AG04449 (cell line): ENCODE measurements at regions of chr1 and their contacts with region 1.

Region 1: DNA sequence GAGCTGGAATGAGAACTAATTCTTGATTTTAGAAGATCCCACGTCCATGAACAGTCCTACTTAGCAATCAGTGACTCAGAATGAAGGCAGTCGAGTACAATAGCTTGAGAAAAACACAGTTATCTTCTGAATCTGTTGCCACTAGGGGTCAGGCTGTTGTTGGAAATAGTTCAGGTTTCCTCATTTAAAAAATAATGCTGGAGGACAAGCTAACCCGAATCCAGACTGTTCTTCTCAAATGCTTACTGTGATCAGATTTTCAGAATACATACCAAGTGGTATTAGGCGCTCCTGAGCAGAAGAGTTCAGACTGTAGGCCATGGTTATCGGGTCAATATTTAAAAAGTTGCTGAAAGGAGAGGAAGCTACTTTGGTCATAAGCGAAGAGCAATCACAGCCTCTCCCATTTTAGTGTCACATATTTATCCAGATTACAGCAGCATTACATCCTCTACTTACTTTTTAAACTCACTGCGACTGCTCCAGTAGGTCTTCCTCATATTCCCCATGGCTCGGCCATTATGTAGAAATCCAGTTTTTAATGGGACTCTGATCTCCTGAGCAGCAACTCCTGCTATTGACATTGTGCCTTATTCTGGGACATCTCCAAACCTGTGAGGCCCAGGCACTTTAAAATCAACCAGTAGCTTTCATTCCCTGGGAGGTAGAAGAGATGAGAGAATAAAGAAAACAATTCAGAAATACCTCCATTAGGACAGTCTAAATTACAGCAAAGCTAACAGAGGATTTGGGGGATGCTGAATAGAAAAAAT is 10.9 kb downstream of the ERRFI1 start:
- DNase-seq: peak; percentile 47
- H3K4me3 ChIP-seq: no peak overlapping the region
- CTCF ChIP-seq: peak; percentile 62

Region 2: GRCh38 chr1:7975212-7975865 is 39.9 kb before region 1 on chr1:
- CTCF ChIA-PET with region 1: interaction called, 107 read pairs
- POLR2A ChIA-PET with region 1: interaction called, 3 read pairs
- DNase-seq: no peak
- H3K4me3 ChIP-seq: no peak overlapping the region
- CTCF ChIP-seq: peak; percentile 90

Region 3: DNA sequence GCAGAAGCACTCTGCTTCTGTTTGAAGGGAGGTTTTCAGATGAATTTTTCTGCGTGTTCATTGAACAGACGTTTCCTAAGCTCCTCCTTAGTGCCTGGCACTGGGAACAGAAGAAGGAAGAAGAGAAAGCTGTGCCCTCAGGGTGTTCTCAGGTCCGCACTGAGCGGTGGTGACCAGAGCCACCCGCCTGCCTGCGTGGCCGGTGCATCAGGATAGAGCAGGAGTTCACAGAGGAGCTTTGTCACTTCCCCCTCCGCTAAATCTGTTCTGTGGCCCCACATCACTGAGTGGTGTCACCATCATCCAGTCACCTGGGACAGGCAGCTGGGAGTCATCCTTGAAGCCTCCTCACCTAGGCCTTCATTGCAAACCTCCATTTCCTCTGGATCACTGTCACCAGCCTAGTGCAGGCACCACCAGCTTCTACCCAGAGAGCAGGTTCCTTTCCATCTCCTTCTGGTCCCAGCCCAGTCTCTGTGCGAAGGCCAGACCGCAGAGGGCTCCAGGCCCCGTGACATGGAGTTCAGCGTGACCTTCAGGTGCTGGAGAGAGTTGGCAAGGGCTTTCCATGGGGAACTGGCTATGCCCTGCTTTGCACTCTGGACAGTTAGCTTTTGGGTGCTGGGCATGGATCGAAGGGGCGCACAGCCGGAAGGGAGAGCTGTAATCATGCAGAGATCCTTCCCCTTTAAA is 32.0 kb before region 1 on chr1:
- CTCF ChIA-PET with region 1: interaction called, 107 read pairs
- POLR2A ChIA-PET with region 1: no interaction called
- DNase-seq: no peak
- H3K4me3 ChIP-seq: no peak overlapping the region
- CTCF ChIP-seq: no peak

Region 4: DNA sequence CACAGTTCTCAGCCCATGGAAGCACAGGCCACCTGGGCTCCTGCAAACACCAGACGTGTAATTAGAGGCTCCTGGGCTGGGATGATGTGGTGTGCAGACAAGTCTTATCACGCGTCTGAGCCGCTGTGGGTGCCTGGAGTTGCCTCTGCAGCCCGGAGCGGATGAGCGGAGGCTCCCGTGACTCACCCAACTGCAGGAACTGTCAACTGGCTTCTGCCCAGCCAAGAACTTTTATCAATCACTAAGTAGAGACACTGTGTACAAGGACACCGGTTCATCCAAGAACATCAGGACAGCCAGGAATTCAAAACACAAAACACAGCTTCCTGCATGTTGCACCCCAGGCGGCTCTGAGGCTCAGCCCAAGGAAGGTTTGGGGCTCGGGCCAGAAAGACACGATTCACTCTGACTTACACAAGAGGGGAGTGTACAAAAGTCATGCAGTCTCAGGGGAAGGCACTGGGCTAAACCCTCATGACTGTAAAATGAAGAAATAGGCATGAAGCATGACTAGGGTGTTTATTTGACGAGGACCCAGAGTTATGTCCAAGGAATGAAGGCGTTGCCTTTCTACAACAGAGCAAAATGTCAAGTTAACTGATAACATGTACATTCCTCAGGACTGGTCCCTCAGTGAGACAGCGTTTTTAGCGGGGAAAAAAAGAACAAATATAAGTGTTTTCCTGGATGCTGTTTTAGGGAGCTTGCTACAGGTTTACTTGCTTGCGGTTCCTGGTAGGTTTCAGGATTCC is 10.2 kb before region 1 on chr1:
- CTCF ChIA-PET with region 1: interaction called, 39 read pairs
- POLR2A ChIA-PET with region 1: interaction called, 4 read pairs
- DNase-seq: peak; percentile 89
- H3K4me3 ChIP-seq: no peak overlapping the region
- CTCF ChIP-seq: no peak

Region 5: DNA sequence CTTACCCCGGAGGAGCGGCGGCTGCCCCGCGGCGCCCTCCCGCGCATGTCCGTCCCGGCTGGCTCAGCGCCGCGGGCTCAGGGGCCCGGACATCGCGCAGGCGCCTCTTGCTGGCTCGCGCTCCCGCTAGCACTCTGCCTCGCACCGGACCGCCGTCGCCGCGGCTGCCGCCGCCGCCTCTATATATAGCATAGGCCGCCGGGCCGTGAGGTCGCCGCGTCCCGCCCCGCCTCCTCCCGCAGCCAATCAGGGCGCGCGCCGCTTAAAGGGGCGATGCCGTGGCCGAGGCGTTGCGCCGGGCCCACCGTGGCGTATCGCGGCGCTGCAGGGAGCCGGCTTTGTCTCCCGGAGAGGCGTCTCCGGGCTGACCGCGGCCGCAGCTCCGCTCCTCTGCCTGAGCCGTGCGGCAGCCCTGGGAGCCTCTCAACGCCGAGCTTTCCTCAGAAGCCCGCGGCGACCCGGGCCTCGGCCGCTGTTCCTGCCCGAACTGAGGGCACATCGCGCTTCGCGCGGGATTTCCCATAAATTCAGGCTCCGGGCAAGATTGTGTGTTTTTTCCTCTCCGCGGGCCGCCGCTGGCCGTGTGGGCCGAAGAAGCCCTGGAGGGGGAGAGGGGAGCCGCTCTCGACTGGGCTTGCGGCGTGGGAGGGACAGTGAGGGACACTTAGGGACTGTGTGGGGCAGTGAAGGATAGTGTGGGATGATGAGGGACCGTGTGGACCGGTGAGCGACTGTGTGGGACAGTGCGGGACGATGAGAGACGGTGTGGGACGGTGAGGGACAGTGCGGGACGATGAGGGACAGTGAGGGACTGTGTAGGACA is 11.1 kb after region 1 on chr1 and contains the start of gene ERRFI1:
- CTCF ChIA-PET with region 1: interaction called, 50 read pairs
- POLR2A ChIA-PET with region 1: interaction called, 6 read pairs
- DNase-seq: no peak
- H3K4me3 ChIP-seq: peak within 1 kb of the TSS; percentile 80
- CTCF ChIP-seq: no peak

Region 6: GRCh38 chr1:8343464-8344001 is 328.3 kb after region 1 on chr1:
- CTCF ChIA-PET with region 1: interaction called, 138 read pairs
- POLR2A ChIA-PET with region 1: interaction called, 4 read pairs
- DNase-seq: peak; percentile 82
- H3K4me3 ChIP-seq: peak overlapping the region; percentile 3; the same call in 1 of the 2 replicates
- CTCF ChIP-seq: no peak

Region 7: GRCh38 chr1:8348777-8349491 is 333.7 kb after region 1 on chr1:
- CTCF ChIA-PET with region 1: interaction called, 138 read pairs
- POLR2A ChIA-PET with region 1: interaction called, 4 read pairs
- DNase-seq: no peak
- H3K4me3 ChIP-seq: no peak overlapping the region
- CTCF ChIP-seq: peak; percentile 79